ENCODE measurements at regions of chr2 and their contacts with region 1.

Region 1: DNA sequence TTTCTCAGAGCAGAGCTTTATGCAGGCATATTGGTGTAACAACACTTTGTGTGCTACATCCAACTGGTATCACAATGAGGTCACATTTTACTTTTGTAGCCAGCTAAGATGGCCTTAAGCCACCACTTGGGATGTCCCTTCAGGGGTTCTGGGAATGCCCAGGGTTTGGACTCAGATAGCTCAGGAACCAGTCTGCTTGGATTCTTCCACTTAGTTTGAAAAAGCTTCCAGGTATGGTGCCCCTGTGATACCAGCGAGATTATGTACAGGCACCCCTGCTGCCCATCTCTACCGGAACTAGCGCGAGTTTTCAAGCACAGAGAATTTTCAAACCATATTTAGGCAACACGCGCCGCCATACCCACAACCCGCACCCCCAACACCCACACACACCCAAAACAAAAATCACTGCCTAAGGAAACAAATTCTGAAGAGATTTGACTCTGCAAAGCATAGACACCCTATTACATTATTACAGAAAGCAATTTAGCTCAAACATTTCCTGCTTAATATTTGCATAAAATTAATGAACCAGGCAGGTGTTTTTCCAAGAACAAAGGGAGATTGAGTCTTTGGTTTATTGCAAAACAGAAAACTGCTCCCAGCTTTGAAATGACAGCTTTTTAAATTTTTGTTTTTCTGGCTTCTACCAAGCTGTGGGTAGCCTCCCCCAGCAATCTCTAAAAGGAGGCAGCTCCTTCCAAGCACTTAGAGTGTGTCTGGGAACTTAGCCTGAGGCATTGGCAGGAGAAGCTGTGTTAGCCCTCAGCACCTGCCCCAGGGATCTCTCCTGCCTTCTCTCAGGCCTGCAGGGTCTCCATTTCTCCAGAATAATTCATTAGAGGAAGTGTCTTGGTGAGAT is 58.4 kb downstream of the B3GNT2 start:
- DNase-seq: no peak
- H3K4me3 ChIP-seq: no peak overlapping the region
- H3K27ac ChIP-seq: no peak overlapping the region
- H3K4me1 ChIP-seq: no peaks in the 10 kb centered on the region
- CTCF ChIP-seq: no peak

Region 2: GRCh38 chr2:62372824-62373223 is 118.5 kb after region 1 on chr2:
- CTCF ChIA-PET with region 1: no interaction called
- POLR2A ChIA-PET with region 1: interaction called, 11 read pairs
- intact Hi-C with region 1: no loop called
- DNase-seq: no peak
- H3K4me3 ChIP-seq: no peak overlapping the region
- H3K27ac ChIP-seq: no peak overlapping the region
- H3K4me1 ChIP-seq: no peaks in the 10 kb centered on the region
- CTCF ChIP-seq: no peak